ENCODE measurements at regions of chr1 and their contacts with region 1.

Region 1: DNA sequence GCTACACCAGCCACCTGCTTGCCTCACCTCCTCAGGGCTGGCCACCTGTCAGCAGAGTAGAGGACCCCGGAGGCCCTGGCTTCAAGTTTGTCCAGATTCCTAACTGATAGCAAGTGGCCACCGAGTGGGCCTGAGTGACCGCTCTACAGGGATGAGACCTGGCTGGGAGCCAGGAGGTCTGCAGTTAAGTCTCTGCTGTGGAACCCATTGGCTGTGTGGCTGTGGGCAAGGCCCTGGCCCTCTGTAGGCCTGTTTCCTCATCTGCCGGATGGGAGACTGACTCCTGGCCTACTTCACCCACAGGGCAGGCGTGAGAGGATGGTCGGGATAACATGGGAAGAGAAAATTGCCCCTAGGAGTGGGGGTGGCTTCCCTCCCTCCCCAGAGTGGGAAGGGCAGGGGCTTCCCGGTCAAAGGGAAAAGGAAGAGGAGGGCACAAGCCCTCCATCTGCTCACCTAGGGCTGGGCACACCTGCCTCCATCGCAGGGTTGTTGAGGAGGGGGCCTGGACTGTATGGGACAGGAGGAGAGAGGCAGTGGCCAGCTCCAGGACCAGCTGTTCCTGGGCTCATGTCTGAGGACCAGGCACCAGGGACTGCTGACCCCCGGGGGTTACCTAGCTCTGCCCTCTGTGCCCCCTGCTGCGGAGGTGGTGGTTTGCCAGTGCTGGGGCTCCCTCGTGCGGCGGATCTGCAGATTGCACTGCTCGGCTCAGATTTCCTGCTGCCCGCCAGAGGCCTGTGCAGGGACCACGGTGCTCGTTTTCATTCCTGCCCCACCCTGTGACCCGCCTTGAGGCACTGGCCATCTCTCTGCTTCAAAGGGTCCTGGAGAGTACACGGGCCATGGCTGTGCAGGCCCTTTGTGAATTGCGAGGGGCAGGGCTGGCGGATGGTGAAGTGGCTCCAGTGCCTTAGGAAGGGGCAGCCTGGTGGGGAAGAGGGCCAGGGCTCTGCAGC is 9.1 kb upstream of the MTFR1L start:
- DNase-seq: peak; percentile 67
- H3K4me3 Mint-ChIP-seq: no peak overlapping the region
- H3K27ac Mint-ChIP-seq: no peak overlapping the region
- H3K4me1 Mint-ChIP-seq: no peaks in the 10 kb centered on the region
- H3K27me3 Mint-ChIP-seq: peaks cover 6% of the 10 kb centered on the region

Region 2: GRCh38 chr1:25369241-25369640 is 441.4 kb before region 1 on chr1:
- intact Hi-C with region 1: no loop called
- DNase-seq: no peak
- H3K4me3 Mint-ChIP-seq: no peak overlapping the region
- H3K27ac Mint-ChIP-seq: no peak overlapping the region
- H3K4me1 Mint-ChIP-seq: no peaks in the 10 kb centered on the region
- H3K27me3 Mint-ChIP-seq: peaks cover 3% of the 10 kb centered on the region

Region 3: GRCh38 chr1:25503551-25504426 is 306.8 kb before region 1 on chr1:
- intact Hi-C with region 1: loop called (anchors 1 kb)
- DNase-seq: peak; percentile 24
- H3K4me3 Mint-ChIP-seq: no peak overlapping the region
- H3K27ac Mint-ChIP-seq: no peak overlapping the region
- H3K4me1 Mint-ChIP-seq: peaks cover 12% of the 10 kb centered on the region
- H3K27me3 Mint-ChIP-seq: no peaks in the 10 kb centered on the region

Region 4: GRCh38 chr1:25520446-25521061 is 290.1 kb before region 1 on chr1:
- intact Hi-C with region 1: loop called (anchors 1 kb)
- DNase-seq: peak; percentile 44
- H3K4me3 Mint-ChIP-seq: no peak overlapping the region
- H3K27ac Mint-ChIP-seq: no peak overlapping the region
- H3K4me1 Mint-ChIP-seq: peaks cover 5% of the 10 kb centered on the region
- H3K27me3 Mint-ChIP-seq: peaks cover 3% of the 10 kb centered on the region

Region 5: DNA sequence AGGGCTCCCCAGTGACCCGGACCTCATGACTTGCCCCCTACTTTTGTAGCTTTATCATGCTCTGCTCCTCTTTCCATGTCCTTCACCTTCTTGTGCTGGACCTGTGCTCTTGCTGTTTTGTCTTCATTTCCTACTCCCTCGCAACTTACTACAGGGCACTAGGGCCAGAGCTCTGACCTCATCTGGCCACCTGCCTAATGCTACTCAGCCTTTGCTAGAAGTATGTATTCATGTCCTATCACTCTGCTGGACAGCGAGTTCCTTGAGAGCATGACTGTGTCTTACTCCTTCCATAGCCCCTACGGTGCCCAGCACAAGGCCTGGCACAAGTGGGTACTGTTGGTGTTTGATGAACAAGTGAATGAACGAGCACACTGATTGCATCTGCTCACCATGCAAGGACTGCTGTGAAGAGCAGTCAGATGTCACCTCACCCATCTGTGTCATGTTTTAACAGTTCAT is 11.0 kb after region 1 on chr1:
- intact Hi-C with region 1: no loop called
- DNase-seq: no peak
- H3K4me3 Mint-ChIP-seq: peak overlapping the region; percentile 93
- H3K27ac Mint-ChIP-seq: peak overlapping the region; percentile 44
- H3K4me1 Mint-ChIP-seq: peaks cover 35% of the 10 kb centered on the region
- H3K27me3 Mint-ChIP-seq: no peaks in the 10 kb centered on the region

Region 6: GRCh38 chr1:25874934-25875855 is 64.6 kb after region 1 on chr1 and contains the start of gene PAQR7:
- intact Hi-C with region 1: no loop called
- DNase-seq: peak; percentile 50
- H3K4me3 Mint-ChIP-seq: peak within 1 kb of the TSS; percentile 84
- H3K27ac Mint-ChIP-seq: peak within 1 kb of the TSS; percentile 70
- H3K4me1 Mint-ChIP-seq: no peaks in the 10 kb centered on the region
- H3K27me3 Mint-ChIP-seq: peaks cover 12% of the 10 kb centered on the region
- total RNA-seq, gene PAQR7: 5.8 and 6.1 TPM in 2 replicates

Region 7: DNA sequence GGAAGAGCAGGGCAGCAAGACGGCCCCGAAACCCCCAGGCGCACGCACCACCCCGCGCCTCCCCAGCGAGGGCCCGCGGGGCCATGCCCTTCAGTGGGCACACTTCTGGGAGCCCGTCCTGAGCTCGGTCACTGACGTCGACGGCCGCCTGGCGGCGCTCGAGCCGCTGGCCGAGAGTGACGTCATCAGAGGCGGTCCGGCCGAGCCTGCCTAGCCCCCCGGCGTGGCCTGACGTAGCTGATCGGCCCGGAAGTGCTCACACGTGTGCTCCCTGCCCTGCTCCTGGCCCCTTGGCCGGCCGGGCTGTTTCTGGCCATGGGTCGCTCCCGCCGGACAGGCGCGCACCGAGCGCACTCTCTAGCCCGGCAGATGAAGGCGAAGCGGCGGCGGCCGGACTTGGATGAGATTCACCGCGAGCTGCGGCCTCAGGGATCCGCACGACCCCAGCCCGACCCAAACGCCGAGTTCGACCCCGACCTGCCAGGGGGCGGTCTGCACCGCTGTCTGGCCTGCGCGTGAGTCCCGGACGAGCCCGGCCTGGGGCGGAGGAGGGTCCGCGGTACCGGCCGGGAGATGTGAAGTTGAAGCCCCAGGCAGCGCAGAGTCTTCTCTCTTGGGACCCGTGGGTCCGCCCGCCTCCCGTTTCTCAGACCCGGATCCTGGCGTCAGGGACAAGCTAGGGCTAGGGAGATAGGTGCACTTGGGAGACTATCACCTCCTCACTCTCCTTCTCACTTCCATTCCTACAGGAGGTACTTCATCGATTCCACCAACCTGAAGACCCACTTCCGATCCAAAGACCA is 359.2 kb after region 1 on chr1 and contains the start of gene ZNF593:
- intact Hi-C with region 1: no loop called
- DNase-seq: peak; percentile 85
- H3K4me3 Mint-ChIP-seq: peak within 1 kb of the TSS; percentile 92
- H3K27ac Mint-ChIP-seq: peak within 1 kb of the TSS; percentile 88
- H3K4me1 Mint-ChIP-seq: peaks cover 29% of the 10 kb centered on the region
- H3K27me3 Mint-ChIP-seq: peaks cover 17% of the 10 kb centered on the region
- total RNA-seq, gene ZNF593: 81.3 and 83.0 TPM in 2 replicates